Vagina (tissue), 2 donors: ENCODE measurements at regions of chr1 and their contacts with region 1.

Region 1: GRCh38 chr1:115282807-115283208 is 55.2 kb downstream of the NGF start:
- DNase-seq: peak in 1 of 2 donors; percentile 96
- H3K4me3 ChIP-seq: no peak overlapping the region
- H3K27ac ChIP-seq: peak overlapping the region; percentile 93
- H3K4me1 ChIP-seq: peaks cover 66% of the 10 kb centered on the region
- H3K27me3 ChIP-seq: no peaks in the 10 kb centered on the region
- CTCF ChIP-seq: no peak
- POLR2A ChIP-seq: no peak

Region 2: DNA sequence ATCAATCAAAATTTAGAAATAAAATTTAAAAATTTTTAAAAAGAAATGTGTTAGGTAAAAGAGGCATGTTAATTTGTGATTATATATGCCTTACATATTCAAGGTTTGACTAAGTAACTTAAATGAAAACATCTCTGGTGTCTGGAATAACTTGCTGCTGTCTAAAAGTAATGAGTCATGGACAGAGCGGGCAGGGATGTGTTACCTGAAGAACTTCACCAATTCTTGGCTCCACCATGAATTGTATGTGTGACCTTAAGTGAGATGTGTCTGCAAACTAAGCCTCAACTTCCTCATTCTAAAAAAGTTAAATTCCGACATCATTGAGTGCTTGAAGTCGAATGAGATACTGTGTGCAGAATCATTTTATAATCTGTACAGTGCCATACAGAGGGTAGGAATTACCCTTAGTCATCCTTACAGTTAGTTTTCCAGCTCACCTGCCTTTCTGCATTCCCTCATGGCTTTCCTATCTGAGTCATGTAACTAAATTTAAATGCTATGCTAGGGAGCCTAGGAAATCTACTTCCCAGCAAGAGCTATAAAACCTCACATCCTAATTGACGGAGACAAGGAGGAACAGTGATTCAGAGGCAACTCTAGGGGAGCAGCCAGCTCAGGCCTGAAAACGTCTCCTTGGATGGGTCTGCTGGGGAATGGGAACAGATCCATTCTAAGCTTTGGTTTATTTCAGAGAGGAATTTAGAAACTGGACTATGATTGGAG is 92.8 kb before region 1 on chr1:
- intact Hi-C with region 1: loop called (anchors 10 kb)
- DNase-seq: no peak
- H3K4me3 ChIP-seq: no peak overlapping the region
- H3K27ac ChIP-seq: peak overlapping the region; percentile 41
- H3K4me1 ChIP-seq: peaks cover 20% of the 10 kb centered on the region
- H3K27me3 ChIP-seq: no peaks in the 10 kb centered on the region
- CTCF ChIP-seq: no peak
- POLR2A ChIP-seq: no peak

Region 3: DNA sequence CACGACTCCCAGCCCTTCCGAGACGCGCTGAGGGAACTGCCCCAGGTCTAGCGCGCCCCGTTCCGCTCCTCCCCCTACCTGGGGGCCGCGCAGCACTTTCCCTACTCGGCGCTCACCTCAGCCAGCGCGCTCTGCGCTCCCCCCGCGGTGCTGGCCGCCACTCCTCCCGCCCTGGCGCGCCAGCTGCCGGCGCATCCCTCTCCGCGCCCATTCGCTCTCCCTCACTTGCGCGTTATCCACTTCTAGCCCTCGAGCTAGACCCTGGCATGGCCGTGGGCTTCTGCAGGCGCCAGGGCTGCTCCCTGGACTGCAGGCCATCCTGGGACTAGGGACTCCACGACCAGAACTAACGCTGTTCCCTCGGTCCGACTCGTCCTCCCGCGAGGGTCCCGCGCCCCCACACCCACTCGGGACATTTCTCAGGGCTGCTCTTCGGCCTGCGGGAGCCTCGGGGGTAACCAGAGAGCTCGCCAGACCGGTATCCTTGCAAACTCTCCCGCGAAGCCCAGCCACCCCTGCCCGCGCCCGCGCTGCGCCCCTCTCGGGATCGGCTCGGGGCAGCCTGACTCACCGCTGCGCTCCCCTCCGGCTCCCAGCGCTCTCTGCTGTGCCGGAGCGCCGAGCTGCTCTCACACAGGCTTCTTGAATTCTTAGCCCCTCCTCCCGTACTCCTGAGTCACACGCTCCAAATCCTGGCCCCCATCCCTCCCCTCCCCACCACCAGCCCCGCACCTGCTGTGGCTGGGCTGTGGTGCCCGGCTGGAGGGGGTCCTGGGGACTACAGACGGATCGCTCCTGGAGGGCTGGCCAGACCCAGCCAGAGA is 55.0 kb after region 1 on chr1 and contains the start of gene NGF:
- intact Hi-C with region 1: loop called (anchors 2 kb)
- DNase-seq: no peak
- H3K4me3 ChIP-seq: peak within 1 kb of the TSS; percentile 62 to 64
- H3K27ac ChIP-seq: peak within 1 kb of the TSS; percentile 72
- H3K4me1 ChIP-seq: peaks cover 35% of the 10 kb centered on the region
- H3K27me3 ChIP-seq: no peaks in the 10 kb centered on the region
- CTCF ChIP-seq: no peak
- POLR2A ChIP-seq: peak in 1 of 2 donors; percentile 40
- total RNA-seq, gene NGF: 2.7 TPM

Region 4: DNA sequence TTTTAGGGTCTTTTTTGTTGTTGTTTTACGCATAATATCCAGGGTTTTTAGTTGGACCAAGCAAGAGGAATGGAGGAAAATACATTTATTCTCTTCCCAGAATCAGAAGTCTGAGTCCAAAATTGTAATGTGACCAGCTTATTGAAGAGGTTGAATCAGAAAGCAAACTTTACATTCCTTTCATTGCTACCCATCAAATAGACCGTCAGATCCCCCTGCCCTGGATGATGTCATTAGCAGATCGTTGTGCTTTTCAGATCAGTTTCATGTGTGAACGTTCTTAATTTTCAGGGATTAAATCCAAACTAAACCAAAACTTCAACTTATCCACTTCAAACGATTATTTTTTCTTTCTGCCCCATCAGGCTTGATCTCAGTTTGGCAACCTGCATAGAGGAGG is 141.0 kb after region 1 on chr1:
- intact Hi-C with region 1: no loop called
- DNase-seq: no peak
- H3K4me3 ChIP-seq: no peak overlapping the region
- H3K27ac ChIP-seq: no peak overlapping the region
- H3K4me1 ChIP-seq: no peaks in the 10 kb centered on the region
- H3K27me3 ChIP-seq: no peaks in the 10 kb centered on the region
- CTCF ChIP-seq: no peak
- POLR2A ChIP-seq: no peak